ENCODE measurements at regions of chr19 and their contacts with region 1.

Region 1: DNA sequence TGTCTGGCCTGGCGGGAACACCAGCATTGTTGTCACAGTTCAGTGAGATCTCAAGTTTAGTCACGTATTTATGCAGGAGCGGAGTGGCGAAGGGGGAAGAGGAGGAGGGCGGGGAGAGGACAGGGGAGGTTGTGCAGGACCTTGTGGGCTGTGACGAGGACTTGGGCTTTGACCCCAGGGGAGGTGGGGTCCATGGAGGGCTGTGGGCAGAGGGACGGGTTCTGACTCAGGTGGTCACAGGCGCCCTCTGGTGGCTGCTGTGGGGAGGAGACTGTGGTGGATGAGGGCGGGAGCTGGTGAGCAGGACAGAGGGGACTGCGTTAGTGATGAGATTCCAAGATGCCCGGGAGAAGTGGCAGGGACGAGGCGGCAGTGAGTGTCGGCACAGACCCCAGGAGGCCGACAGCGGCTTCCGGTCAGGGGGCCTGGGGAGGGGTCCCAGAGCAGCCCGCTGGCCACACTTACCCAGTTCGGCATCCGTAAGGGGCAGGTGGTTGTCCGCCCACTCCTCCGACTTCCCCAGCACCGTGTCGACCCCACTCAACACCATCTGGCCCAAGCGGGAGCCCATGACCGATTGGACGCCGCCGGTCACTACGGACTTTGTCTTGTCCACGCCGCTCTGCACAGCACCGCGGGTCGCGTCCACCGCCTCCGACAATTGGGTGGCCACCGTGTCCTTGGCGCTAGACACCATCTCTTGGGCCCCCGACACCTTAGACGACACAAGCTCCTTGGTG is 15.7 kb downstream of the PLIN3 start:
- DNase-seq: peak; percentile 65 to 86
- H3K4me3 ChIP-seq: no peak overlapping the region
- H3K27ac ChIP-seq: no peak overlapping the region
- H3K4me1 ChIP-seq: no peaks in the 10 kb centered on the region
- H3K27me3 ChIP-seq: no peaks in the 10 kb centered on the region
- CTCF ChIP-seq: peak; percentile 85 to 92

Region 2: DNA sequence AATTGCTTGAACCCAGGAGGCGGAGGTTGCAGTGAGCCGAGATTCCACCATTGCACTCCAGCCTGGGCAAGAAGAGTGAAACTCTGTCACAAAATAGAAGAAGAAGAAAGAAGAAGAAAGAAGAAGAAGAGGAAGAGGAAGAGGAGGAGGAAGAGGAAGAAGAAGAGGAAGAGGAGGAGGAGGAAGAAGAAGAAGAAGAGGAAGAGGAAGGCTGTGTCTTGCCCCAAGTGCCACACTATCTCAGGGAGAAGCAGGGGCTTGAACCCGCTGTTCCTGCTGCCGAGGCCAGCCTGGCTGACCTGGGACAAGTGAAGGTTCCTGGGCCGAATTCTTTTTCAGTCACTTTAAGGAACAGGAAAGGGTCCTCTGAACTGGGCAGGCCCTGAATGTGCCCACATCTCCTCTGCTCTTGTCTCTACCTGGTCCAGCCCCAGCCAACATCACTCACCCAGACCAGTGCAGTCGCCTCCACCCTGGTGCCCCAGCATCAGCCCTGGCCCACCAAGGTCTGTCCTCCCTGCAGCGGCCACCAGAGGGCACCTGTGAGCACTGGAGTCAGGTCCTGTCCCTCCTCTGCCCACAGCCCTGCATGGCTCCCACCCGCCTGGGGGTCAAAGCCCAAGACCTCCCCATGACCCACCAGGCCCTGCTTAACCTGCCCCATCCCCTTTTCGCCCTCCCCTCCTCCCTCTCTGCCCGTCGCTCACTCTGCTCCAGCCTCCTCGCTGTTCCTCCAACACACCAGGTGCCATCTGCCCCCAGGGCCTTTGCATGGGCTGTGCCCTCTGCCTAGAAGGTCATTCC is 40.2 kb before region 1 on chr19:
- intact Hi-C with region 1: loop called (anchors 2 kb)
- DNase-seq: peak; percentile 81 to 85
- H3K4me3 ChIP-seq: no peak overlapping the region
- H3K27ac ChIP-seq: peak overlapping the region; percentile 83 to 84
- H3K4me1 ChIP-seq: peaks cover 0 to 50% (median 30%) of the 10 kb centered on the region in 4 donors
- H3K27me3 ChIP-seq: no peaks in the 10 kb centered on the region
- CTCF ChIP-seq: peak; percentile 78 to 88